ENCODE measurements at regions of chr12 and their contacts with region 1.

Region 1: DNA sequence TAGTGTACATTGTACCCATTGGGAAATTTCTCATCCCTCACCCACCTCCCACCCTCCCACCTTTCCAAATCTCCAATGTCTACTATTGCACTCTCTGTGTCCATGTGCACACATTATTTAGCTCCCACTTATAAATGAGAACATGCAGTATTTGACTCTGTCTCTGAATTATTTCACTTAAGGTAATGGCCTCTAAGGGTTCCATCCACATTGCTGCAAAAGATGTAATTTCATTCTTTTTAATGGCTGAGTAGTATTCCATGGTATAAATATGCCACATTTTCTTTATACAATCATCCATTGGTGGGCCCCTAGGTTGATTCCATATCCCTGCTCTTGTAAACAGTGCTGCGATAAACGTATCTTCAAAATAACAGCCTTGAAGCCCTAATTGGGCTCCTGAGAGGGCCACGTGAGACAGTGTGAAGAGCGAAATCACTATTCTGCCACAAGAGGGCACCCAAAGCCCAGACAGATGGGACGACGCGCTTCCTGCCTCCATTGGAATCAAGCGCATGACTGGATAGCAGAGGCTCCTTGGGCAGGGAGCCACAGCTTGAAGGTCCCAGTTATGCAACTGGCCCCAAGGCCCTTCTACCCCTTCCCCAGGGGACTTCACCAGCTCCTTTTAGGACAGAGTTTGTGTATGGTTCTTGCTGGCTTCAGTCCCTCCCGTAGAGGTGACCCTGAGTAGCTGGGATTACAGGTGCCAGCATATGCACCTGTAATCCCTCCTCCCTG is 21.3 kb upstream of the CD27 start:
- DNase-seq: peak; percentile 53 to 94 (median 74)
- ATAC-seq: peak; percentile 63
- H3K4me3 ChIP-seq: no peak overlapping the region
- H3K4me3 Mint-ChIP-seq: no peak overlapping the region
- H3K27ac ChIP-seq: peak overlapping the region in 1 of 2 experiments; percentile 37
- H3K27ac Mint-ChIP-seq: peak overlapping the region; percentile 65
- H3K4me1 ChIP-seq: peaks cover 40% of the 10 kb centered on the region
- H3K4me1 Mint-ChIP-seq: peaks cover 41% of the 10 kb centered on the region
- H3K27me3 ChIP-seq: no peaks in the 10 kb centered on the region
- H3K27me3 Mint-ChIP-seq: no peaks in the 10 kb centered on the region
- CTCF ChIP-seq: peak; percentile 74

Region 2: GRCh38 chr12:6345319-6346091 is 77.9 kb before region 1 on chr12:
- CTCF ChIA-PET with region 1: interaction called, 11 read pairs
- POLR2A ChIA-PET with region 1: no interaction called
- intact Hi-C with region 1: no loop called
- DNase-seq: peak in 5 of 9 experiments; percentile 38 to 70 (median 46)
- ATAC-seq: peak; percentile 55
- H3K4me3 ChIP-seq: no peak overlapping the region
- H3K4me3 Mint-ChIP-seq: peak overlapping the region; percentile 53
- H3K27ac ChIP-seq: no peak overlapping the region
- H3K27ac Mint-ChIP-seq: peak overlapping the region; percentile 86
- H3K4me1 ChIP-seq: peaks cover 48% of the 10 kb centered on the region
- H3K4me1 Mint-ChIP-seq: peaks cover 56% of the 10 kb centered on the region
- H3K27me3 ChIP-seq: no peaks in the 10 kb centered on the region
- H3K27me3 Mint-ChIP-seq: no peaks in the 10 kb centered on the region
- CTCF ChIP-seq: no peak

Region 3: DNA sequence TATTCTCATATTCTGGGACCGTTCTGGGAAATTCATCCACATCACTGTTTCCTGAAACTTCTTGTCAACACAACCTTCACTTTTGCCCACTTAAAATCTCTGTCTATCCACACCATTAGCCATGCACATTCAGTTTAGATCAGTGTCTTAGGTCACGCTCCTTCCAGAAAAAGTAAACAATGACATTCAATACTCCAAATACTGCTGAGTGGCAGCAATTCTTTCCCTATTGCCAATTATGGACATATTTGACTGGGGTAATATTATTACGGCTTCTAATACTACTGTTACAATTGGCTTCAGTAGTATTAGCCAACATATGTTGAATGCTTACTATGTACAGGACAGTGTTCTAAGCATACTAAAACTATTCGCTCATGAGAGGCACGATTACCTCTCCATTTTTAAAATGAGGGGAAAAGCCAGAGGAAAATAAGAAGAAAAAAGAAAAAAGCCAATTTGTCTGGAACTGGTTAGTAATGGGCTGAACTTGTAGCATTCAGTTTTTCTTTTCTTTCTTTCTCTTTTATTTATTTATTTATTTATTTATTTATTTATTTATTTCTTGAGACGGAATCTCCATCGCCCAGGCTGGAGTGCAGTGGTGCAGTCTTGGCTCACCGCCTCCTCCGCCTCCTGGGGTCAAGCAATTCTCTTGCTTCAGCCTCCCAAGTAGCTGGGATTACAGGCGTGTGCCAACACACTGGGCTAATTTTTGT is 16.0 kb before region 1 on chr12:
- CTCF ChIA-PET with region 1: no interaction called
- POLR2A ChIA-PET with region 1: no interaction called
- intact Hi-C with region 1: no loop called
- DNase-seq: no peak
- ATAC-seq: no peak
- H3K4me3 ChIP-seq: no peak overlapping the region
- H3K4me3 Mint-ChIP-seq: no peak overlapping the region
- H3K27ac ChIP-seq: no peak overlapping the region
- H3K27ac Mint-ChIP-seq: no peak overlapping the region
- H3K4me1 ChIP-seq: no peaks in the 10 kb centered on the region
- H3K4me1 Mint-ChIP-seq: no peaks in the 10 kb centered on the region
- H3K27me3 ChIP-seq: no peaks in the 10 kb centered on the region
- H3K27me3 Mint-ChIP-seq: peaks cover 2% of the 10 kb centered on the region
- CTCF ChIP-seq: no peak

Region 4: GRCh38 chr12:6451348-6452244 is 28.2 kb after region 1 on chr12 and contains the start of gene TAPBPL:
- CTCF ChIA-PET with region 1: interaction called, 284 read pairs
- POLR2A ChIA-PET with region 1: interaction called, 51 read pairs
- intact Hi-C with region 1: loop called in 1 of 2 experiments (anchors 1 kb)
- DNase-seq: peak; percentile 50 to 96 (median 79)
- ATAC-seq: peak; percentile 88
- H3K4me3 ChIP-seq: peak within 1 kb of the TSS; percentile 68 to 82
- H3K4me3 Mint-ChIP-seq: peak within 1 kb of the TSS; percentile 99
- H3K27ac ChIP-seq: peak within 1 kb of the TSS; percentile 85 to 95
- H3K27ac Mint-ChIP-seq: peak within 1 kb of the TSS; percentile 99
- H3K4me1 ChIP-seq: peaks cover 63% of the 10 kb centered on the region
- H3K4me1 Mint-ChIP-seq: peaks cover 82% of the 10 kb centered on the region
- H3K27me3 ChIP-seq: no peaks in the 10 kb centered on the region
- H3K27me3 Mint-ChIP-seq: no peaks in the 10 kb centered on the region
- CTCF ChIP-seq: no peak
- total RNA-seq, gene TAPBPL: 11.8 to 12.2 TPM

Region 5: GRCh38 chr12:6488240-6488639 is 64.8 kb after region 1 on chr12:
- CTCF ChIA-PET with region 1: interaction called, 11 read pairs
- POLR2A ChIA-PET with region 1: interaction called, 4 read pairs
- intact Hi-C with region 1: loop called in 1 of 2 experiments (anchors 1 kb)
- DNase-seq: no peak
- ATAC-seq: no peak
- H3K4me3 ChIP-seq: no peak overlapping the region
- H3K4me3 Mint-ChIP-seq: no peak overlapping the region
- H3K27ac ChIP-seq: no peak overlapping the region
- H3K27ac Mint-ChIP-seq: no peak overlapping the region
- H3K4me1 ChIP-seq: peaks cover 9% of the 10 kb centered on the region
- H3K4me1 Mint-ChIP-seq: peaks cover 11% of the 10 kb centered on the region
- H3K27me3 ChIP-seq: no peaks in the 10 kb centered on the region
- H3K27me3 Mint-ChIP-seq: no peaks in the 10 kb centered on the region
- CTCF ChIP-seq: no peak

Region 6: GRCh38 chr12:6540181-6540877 is 116.9 kb after region 1 on chr12:
- CTCF ChIA-PET with region 1: interaction called, 170 read pairs
- POLR2A ChIA-PET with region 1: interaction called, 19 read pairs
- intact Hi-C with region 1: loop called (anchors 1 kb)
- DNase-seq: peak in 6 of 9 experiments; percentile 38 to 59 (median 47)
- ATAC-seq: no peak
- H3K4me3 ChIP-seq: peak overlapping the region in 1 of 2 experiments; percentile 37
- H3K4me3 Mint-ChIP-seq: peak overlapping the region; percentile 75
- H3K27ac ChIP-seq: no peak overlapping the region
- H3K27ac Mint-ChIP-seq: peak overlapping the region; percentile 73
- H3K4me1 ChIP-seq: peaks cover 36% of the 10 kb centered on the region
- H3K4me1 Mint-ChIP-seq: peaks cover 44% of the 10 kb centered on the region
- H3K27me3 ChIP-seq: no peaks in the 10 kb centered on the region
- H3K27me3 Mint-ChIP-seq: no peaks in the 10 kb centered on the region
- CTCF ChIP-seq: no peak